HEK293 (cell line): ENCODE measurements at regions of chr11 and their contacts with region 1.

Region 1: GRCh38 chr11:124673333-124674167 is at the starts of genes SIAE and SPA17:
- H3K4me3 ChIP-seq: peak within 1 kb of the TSS; percentile 78
- H3K27ac ChIP-seq: peak within 1 kb of the TSS; percentile 35; the same call in 1 of the 2 replicates
- H3K4me1 ChIP-seq: no peaks in the 10 kb centered on the region; the same call in 1 of the 2 replicates
- CTCF ChIP-seq: no peak

Region 2: GRCh38 chr11:124644426-124645280 is 28.9 kb before region 1 on chr11:
- CTCF ChIA-PET with region 1: interaction called, 43 read pairs
- POLR2A ChIA-PET with region 1: no interaction called
- H3K4me3 ChIP-seq: no peak overlapping the region
- H3K27ac ChIP-seq: no peak overlapping the region
- H3K4me1 ChIP-seq: no peaks in the 10 kb centered on the region
- CTCF ChIP-seq: peak; percentile 72; the same call in 1 of the 2 replicates

Region 3: GRCh38 chr11:124758317-124759203 is 85.0 kb after region 1 on chr11:
- CTCF ChIA-PET with region 1: interaction called, 40 read pairs
- POLR2A ChIA-PET with region 1: interaction called, 7 read pairs
- H3K4me3 ChIP-seq: no peak overlapping the region
- H3K27ac ChIP-seq: no peak overlapping the region
- H3K4me1 ChIP-seq: no peaks in the 10 kb centered on the region
- CTCF ChIP-seq: no peak

Region 4: DNA sequence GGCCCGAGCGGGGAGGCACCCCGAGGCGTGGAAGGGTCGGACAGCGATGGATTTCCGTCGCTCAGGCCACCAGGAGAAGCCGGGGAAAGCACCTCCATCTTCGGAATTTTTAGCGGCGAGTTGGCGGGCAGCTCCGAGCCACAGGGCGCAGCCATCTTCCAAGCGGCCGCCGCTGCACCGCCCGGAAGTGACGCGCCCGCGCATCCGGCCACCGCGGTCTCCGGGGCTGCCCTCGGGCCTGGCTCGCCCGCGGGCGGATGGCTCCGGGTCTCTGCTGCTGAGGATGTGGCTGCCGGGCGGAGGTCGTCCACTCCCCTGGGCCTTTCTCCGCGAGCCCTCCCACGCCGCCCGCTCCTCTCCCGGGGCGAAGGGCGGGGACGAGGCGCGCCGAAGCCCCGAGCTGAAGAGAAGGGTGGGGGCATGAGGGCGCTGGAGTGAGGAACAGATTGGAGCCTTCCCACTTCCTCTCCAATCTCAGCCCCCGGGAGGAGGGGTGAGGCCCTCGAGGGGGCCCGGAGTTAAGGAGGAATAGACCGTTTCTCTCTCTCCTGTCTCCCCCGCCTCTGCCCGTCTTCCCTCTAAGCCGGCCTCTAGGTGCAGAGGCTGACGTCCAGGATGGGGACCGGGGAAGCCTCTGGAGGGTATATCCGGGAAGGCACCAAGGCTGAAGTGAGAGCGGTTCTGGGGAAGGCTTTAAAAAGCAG is 126.8 kb after region 1 on chr11 and contains the start of gene MSANTD2:
- CTCF ChIA-PET with region 1: interaction called, 52 read pairs
- POLR2A ChIA-PET with region 1: interaction called, 10 read pairs
- H3K4me3 ChIP-seq: peak within 1 kb of the TSS; percentile 88
- H3K27ac ChIP-seq: peak within 1 kb of the TSS; percentile 92
- H3K4me1 ChIP-seq: no peaks in the 10 kb centered on the region
- CTCF ChIP-seq: peak; percentile 10; the same call in 1 of the 2 replicates

Region 5: GRCh38 chr11:124865921-124866583 is 192.5 kb after region 1 on chr11:
- CTCF ChIA-PET with region 1: interaction called, 19 read pairs
- POLR2A ChIA-PET with region 1: no interaction called
- H3K4me3 ChIP-seq: peak overlapping the region; percentile 13
- H3K27ac ChIP-seq: no peak overlapping the region
- H3K4me1 ChIP-seq: no peaks in the 10 kb centered on the region
- CTCF ChIP-seq: peak; percentile 66; the same call in 1 of the 2 replicates

Region 6: GRCh38 chr11:124976994-124977393 is 303.4 kb after region 1 on chr11:
- CTCF ChIA-PET with region 1: no interaction called
- POLR2A ChIA-PET with region 1: no interaction called
- H3K4me3 ChIP-seq: no peak overlapping the region
- H3K27ac ChIP-seq: no peak overlapping the region
- H3K4me1 ChIP-seq: no peaks in the 10 kb centered on the region
- CTCF ChIP-seq: no peak